Sigmoid colon (tissue), 7 donors: ENCODE measurements at regions of chr22 and their contacts with region 1.

Region 1: DNA sequence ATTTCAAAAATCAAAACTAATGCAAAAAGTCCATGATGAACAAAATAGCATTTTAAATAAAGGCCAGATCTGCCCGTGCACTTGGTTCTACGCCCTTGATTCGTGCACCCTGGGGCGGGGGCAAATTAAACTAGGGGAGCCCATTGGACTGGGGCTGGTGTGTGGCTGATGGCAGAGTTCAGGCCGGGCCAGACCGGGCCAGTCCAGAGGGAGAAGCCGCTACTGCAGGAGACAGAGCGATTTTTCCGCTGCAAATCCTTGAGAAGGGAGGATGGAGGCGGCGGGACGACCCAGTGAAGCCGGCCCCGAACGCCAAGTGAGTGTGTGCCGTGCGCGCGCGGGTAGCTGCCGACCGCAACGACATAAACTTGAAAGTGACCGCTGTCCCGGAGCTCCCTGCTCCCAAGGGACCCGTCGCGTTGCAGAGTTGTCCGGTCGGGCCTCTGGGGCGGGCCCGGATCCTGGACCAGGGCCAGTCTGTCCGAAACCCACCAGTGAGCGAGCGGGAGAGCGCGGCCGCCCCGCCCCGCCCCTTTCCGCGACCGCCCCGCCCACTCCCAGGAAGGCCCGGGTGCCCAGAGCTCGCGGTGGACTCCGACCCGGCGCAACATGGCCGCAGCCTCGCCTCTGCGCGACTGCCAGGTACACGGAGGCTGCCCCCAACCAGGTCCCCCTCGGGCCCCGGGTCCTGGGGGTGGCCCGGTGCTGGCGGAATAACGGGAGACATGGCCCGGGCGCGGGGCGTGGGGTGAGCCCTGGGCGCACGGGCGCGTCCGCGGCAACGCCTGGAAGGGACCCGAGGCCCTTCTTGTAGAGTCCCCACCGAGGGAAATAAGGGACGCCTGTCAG is at the start of gene TTC38:
- DNase-seq: peak; percentile 96
- H3K4me3 ChIP-seq: peak within 1 kb of the TSS; percentile 61 to 78 (median 70)
- H3K27ac ChIP-seq: peak within 1 kb of the TSS; percentile 82 to 87 (median 86)
- H3K4me1 ChIP-seq: peaks cover 0 to 35% (median 26%) of the 10 kb centered on the region in 4 donors
- H3K27me3 ChIP-seq: no peaks in the 10 kb centered on the region
- CTCF ChIP-seq: peak in 1 of 4 experiments; percentile 6
- EP300 ChIP-seq: no peak
- POLR2A ChIP-seq: peak; percentile 18 to 52
- total RNA-seq, gene TTC38: 34.6 to 56.0 (median 40.0) TPM

Region 2: DNA sequence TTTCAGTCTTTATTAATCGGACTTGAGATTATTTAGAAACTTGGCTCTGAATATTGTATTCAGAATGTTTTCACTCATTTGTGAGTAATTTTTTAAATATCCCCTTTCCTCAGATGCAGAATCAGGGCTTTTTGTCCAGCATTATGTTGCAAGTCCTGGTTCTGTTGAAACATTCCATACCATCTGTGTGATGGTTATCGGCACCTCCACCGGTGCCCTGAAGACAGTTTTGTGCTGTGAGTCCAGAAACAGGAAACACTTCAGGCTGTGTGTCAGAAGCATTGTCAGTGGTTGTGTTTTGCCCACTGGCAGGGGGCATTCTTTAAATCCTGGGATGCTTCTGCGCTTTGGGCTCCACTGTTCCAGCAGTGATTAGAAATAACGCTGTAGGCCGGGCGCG is 38.0 kb before region 1 on chr22:
- intact Hi-C with region 1: no loop called
- DNase-seq: no peak
- H3K4me3 ChIP-seq: no peak overlapping the region
- H3K27ac ChIP-seq: no peak overlapping the region
- H3K4me1 ChIP-seq: peaks cover 0 to 14% (median 9%) of the 10 kb centered on the region in 4 donors
- H3K27me3 ChIP-seq: no peaks in the 10 kb centered on the region
- CTCF ChIP-seq: no peak
- EP300 ChIP-seq: no peak
- POLR2A ChIP-seq: no peak

Region 3: DNA sequence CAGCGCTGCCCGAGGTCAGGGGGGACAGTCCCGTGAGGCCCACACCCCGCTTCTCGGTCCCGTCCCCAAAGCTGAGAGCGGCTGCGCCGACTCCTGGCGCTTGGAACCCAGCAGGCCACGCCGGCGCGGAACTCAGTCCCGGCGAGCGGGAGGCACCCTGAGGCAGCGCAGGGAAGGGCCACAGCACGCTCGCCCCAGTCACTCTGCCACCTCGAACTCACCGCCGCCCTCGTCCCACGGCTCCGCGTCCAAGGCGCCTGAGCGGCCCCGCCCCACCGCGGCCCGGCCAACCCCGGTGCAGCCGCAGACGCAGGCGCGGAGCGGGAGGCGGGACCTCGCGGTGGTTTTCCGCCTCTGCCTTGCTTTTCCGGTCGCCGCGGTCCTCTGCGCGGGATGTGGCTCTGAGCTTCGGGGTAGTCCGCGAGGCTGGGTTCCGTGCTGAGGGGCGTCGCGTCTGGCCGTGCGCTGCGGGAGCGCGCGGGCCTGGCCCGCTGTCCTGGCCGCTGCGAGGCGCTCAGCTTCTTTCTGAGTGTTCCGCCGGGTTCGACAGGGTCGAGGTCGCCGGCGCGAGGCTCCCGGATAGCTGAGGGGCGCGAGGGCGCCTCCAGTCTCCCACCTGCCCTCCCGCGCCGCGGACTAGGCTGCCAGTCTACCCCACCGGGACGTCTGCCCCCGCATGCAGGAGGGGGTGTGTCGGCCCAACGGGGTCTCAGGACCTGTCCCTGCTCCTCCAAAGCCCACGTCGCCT is 17.4 kb before region 1 on chr22 and contains the start of gene CDPF1:
- intact Hi-C with region 1: loop called (anchors 2 kb)
- DNase-seq: peak; percentile 94
- H3K4me3 ChIP-seq: peak within 1 kb of the TSS; percentile 78 to 91 (median 86)
- H3K27ac ChIP-seq: peak within 1 kb of the TSS; percentile 86 to 91 (median 90)
- H3K4me1 ChIP-seq: peaks cover 0 to 45% (median 30%) of the 10 kb centered on the region in 4 donors
- H3K27me3 ChIP-seq: no peaks in the 10 kb centered on the region
- CTCF ChIP-seq: no peak
- EP300 ChIP-seq: no peak
- POLR2A ChIP-seq: peak; percentile 51 to 53
- total RNA-seq, gene CDPF1: 15.8 to 18.9 (median 17.5) TPM

Region 4: GRCh38 chr22:46280999-46281623 is 13.5 kb after region 1 on chr22:
- intact Hi-C with region 1: no loop called
- DNase-seq: peak; percentile 53
- H3K4me3 ChIP-seq: no peak overlapping the region
- H3K27ac ChIP-seq: no peak overlapping the region
- H3K4me1 ChIP-seq: no peaks in the 10 kb centered on the region
- H3K27me3 ChIP-seq: no peaks in the 10 kb centered on the region
- CTCF ChIP-seq: no peak
- EP300 ChIP-seq: no peak
- POLR2A ChIP-seq: no peak

Region 5: GRCh38 chr22:46296257-46297150 is 28.8 kb after region 1 on chr22 and contains the start of gene GTSE1:
- intact Hi-C with region 1: loop called (anchors 2 kb)
- DNase-seq: peak; percentile 99
- H3K4me3 ChIP-seq: peak within 1 kb of the TSS; percentile 35 to 62 (median 56)
- H3K27ac ChIP-seq: peak within 1 kb of the TSS; percentile 89 to 96 (median 94)
- H3K4me1 ChIP-seq: peaks cover 0 to 19% (median 16%) of the 10 kb centered on the region in 4 donors
- H3K27me3 ChIP-seq: no peaks in the 10 kb centered on the region
- CTCF ChIP-seq: no peak
- EP300 ChIP-seq: no peak
- POLR2A ChIP-seq: peak in 1 of 2 donors; percentile 33
- total RNA-seq, gene GTSE1: 0.27 to 0.36 (median 0.28) TPM in 3 of 4 donors, not detected in the other